GM13976 (cell line): ENCODE measurements at regions of chr5 and their contacts with region 1.

Region 1: DNA sequence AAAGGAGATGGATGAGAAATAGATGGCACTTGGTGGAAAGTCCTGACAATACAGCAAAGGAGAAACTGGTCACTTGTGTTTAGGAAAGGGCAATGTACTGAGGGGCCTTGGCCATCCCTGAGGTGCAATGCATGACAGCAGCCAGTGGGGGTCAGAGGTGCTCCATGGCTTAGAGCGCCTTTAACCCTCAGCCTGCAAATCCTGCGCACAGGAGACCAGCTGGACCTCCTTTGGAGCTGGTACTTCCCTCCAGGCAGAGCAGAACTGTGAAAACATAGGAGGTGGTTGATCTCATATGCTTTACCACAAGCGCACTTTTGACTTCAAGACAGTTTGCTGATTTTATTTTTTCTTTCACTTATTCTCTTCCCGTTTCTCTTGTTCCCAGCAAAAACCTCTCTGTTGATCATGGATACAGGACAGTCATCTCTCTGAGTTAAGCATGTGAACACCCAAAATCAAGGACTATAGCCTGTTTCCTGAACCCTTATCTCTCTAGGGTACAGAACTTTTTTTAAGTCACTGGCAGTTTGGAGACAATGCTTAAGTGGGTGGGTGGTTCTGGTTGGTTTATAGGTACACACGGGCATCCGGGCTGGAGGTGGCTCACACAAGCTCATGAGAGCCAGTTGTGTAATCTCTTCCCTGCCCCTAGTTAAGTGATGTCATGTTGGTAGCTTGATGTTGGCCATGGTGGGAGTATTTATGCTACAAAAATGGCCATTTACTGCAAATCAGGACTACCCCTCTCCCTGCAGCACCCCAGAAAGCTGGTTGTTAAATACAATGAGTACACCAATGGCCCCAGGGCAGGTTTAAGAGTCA is 37.6 kb upstream of the ANKRD55 start:
- DNase-seq: peak; percentile 63
- CTCF ChIP-seq: peak; percentile 97

Region 2: DNA sequence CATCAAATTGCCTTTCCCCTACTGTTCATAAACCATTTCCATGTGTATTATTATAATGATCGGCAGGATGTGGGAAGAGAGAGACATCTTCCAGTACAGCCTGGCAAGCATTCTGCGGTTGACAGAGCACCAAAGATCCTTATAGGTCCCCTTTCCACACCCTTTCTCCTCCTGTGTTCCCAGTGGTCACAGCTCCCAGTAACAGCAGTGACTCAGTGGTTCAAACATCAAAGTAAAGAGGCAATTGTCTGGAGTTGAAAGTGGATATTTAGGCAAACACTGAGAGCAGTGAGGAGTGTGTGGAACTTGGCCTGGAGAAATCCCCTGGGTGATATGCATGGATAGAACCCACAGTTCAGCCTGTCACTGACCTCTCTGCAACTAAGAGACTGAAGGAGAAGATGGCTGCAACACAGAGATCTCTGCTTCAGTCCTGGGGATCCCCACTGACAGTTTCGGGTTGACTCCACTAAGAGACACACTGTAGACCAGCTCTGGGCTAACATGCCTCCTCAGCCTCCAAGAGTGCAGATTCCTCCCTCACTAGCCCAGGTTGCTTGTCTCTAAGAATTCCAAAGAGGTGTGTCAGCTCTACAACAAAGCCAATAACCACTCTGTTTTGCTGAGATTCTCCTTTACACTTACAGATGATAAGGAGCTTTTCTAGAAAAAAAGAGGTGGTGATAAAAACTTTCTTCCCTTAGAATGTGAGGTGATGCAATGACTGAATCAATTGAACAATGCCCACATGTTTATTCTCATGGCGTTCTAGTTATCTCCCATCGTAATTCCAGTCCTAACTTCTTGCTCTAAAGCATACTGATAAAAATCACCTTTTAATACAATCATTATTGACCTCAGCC is 181.6 kb before region 1 on chr5:
- in situ Hi-C with region 1: no loop called
- DNase-seq: peak; percentile 74
- CTCF ChIP-seq: no peak

Region 3: DNA sequence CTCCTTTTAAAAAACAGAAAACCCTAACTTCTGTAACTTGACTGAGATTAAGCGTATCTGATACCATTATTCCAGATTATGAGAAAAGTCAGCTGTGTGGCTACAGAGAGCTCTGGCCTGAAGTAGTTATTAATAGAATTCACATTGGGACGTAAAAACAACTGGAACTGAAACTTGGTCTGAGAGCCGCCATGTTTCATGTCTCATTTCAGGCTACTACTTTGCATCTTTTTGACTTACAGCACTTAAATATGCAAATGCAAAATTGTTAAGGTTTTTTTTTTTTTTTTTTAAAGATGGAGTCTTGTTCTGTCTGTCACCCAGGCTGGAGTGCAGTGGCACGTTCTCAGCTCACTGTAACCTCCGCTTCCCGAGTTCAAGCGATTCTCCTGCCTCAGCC is 569.8 kb after region 1 on chr5:
- in situ Hi-C with region 1: loop called (anchors 10 kb)
- DNase-seq: no peak
- CTCF ChIP-seq: no peak

Region 4: GRCh38 chr5:57128325-57128724 is 857.5 kb after region 1 on chr5:
- in situ Hi-C with region 1: loop called (anchors 25 kb)
- DNase-seq: no peak
- CTCF ChIP-seq: no peak